ENCODE measurements at regions of chr1 and their contacts with region 1.

Region 1: GRCh38 chr1:59422921-59423575 is 126.2 kb downstream of the FGGY start:
- DNase-seq: peak in 1 of 2 experiments; percentile 36
- H3K4me3 ChIP-seq: no peak overlapping the region
- H3K27ac ChIP-seq: no peak overlapping the region
- H3K4me1 ChIP-seq: peaks cover 25% of the 10 kb centered on the region
- H3K27me3 ChIP-seq: no peaks in the 10 kb centered on the region
- CTCF ChIP-seq: no peak

Region 2: DNA sequence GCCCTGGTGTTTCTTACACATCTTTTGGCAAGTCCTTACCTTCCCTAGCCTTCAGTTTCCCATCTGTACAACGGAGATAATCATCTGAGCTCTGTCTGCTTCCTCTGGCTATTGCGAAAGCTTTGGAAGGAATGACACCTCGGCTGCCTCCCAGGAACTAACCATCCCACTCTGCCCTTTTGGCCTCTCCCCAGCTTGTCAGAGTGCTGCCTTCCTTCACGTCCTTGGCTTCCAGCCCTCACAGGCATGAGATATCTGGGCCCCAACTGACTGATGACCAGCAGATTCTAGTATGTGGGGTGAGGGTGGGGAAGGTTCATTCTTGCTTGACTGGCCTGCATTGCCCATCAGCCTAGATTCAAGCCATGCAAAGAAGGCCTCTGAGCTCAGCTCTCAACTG is 379.3 kb before region 1 on chr1:
- CTCF ChIA-PET with region 1: no interaction called
- POLR2A ChIA-PET with region 1: no interaction called
- intact Hi-C with region 1: loop called (anchors 5 kb)
- DNase-seq: peak; percentile 85
- H3K4me3 ChIP-seq: no peak overlapping the region
- H3K27ac ChIP-seq: peak overlapping the region; percentile 22; the same call in 1 of the 2 replicates
- H3K4me1 ChIP-seq: peaks cover 30% of the 10 kb centered on the region
- H3K27me3 ChIP-seq: no peaks in the 10 kb centered on the region
- CTCF ChIP-seq: no peak

Region 3: GRCh38 chr1:59150577-59151391 is 272.3 kb before region 1 on chr1:
- CTCF ChIA-PET with region 1: no interaction called
- POLR2A ChIA-PET with region 1: no interaction called
- intact Hi-C with region 1: loop called (anchors 10 kb)
- DNase-seq: peak; percentile 82 to 92
- H3K4me3 ChIP-seq: peak overlapping the region; percentile 48
- H3K27ac ChIP-seq: peak overlapping the region; percentile 72
- H3K4me1 ChIP-seq: peaks cover 66% of the 10 kb centered on the region
- H3K27me3 ChIP-seq: no peaks in the 10 kb centered on the region
- CTCF ChIP-seq: no peak

Region 4: GRCh38 chr1:59232216-59232615 is 190.8 kb before region 1 on chr1:
- CTCF ChIA-PET with region 1: no interaction called
- POLR2A ChIA-PET with region 1: interaction called, 10 read pairs
- intact Hi-C with region 1: no loop called
- DNase-seq: no peak
- H3K4me3 ChIP-seq: no peak overlapping the region
- H3K27ac ChIP-seq: no peak overlapping the region
- H3K4me1 ChIP-seq: no peaks in the 10 kb centered on the region
- H3K27me3 ChIP-seq: no peaks in the 10 kb centered on the region
- CTCF ChIP-seq: no peak

Region 5: DNA sequence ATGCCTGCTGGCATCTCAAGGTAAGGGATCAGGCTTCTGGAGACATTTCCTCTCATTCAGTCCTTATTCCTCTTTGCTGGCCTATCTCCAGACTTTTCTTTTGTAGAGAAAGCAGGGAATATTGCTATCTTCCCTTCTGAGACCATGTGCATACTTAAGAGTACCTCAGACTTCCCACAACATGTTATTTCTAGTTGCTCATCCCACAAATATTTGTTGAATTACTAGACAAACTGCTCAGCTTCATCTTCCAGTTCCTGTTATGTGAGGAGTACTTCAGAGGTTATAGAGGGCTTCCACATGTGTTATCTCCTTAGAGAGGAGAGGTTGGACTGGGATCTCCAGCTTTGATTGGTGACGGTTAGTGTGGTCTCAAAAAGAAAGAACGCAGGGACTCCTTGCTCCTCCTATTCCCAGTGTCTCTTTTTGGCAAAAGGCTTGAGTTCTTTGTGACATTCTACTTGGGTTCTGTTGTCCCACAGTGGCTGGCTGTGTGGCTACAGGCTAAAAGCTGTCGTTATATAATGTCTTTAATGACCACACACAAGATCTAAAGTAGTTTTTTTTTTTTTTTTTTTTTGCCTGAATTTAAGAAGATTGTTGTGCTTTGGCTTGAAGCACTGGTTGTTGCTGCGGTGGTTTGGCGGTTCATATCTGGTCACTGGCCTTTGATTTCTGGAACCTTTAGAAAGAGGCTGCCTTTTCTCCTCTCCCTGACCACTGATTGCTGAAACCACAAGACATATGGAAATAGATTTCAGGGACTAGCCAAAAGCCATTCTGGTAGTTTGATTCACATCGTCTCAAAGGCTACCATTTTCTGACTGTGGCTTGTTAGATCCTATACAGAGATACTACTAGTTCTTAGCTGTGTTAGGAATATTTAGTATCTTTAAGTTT is 47.5 kb before region 1 on chr1:
- CTCF ChIA-PET with region 1: no interaction called
- POLR2A ChIA-PET with region 1: no interaction called
- intact Hi-C with region 1: loop called (anchors 2 kb)
- DNase-seq: peak; percentile 25 to 54
- H3K4me3 ChIP-seq: no peak overlapping the region
- H3K27ac ChIP-seq: no peak overlapping the region
- H3K4me1 ChIP-seq: no peaks in the 10 kb centered on the region
- H3K27me3 ChIP-seq: no peaks in the 10 kb centered on the region
- CTCF ChIP-seq: no peak

Region 6: DNA sequence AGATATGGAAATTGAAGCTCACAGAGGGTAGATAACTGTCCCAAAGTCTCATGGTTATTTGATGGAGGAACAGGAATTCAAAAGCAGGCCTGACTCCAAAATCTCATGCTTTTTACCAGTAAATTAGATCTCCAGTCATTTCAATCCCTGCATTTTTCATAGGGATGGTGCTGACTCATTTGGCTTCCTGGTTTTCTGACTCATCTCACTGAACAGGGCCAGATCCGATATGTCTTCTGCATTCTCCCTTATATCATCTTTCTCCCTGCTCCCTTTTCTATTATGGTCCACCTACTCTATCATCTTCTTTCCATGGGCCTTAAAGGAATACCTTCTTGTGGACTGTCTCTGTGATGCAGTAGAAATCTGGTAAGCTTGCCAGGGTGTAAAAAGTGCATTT is 61.0 kb after region 1 on chr1:
- CTCF ChIA-PET with region 1: interaction called, 4 read pairs
- POLR2A ChIA-PET with region 1: no interaction called
- intact Hi-C with region 1: loop called (anchors 5 kb)
- DNase-seq: peak in 1 of 2 experiments; percentile 52
- H3K4me3 ChIP-seq: no peak overlapping the region
- H3K27ac ChIP-seq: peak overlapping the region; percentile 19
- H3K4me1 ChIP-seq: peaks cover 22% of the 10 kb centered on the region
- H3K27me3 ChIP-seq: no peaks in the 10 kb centered on the region
- CTCF ChIP-seq: no peak

Region 7: DNA sequence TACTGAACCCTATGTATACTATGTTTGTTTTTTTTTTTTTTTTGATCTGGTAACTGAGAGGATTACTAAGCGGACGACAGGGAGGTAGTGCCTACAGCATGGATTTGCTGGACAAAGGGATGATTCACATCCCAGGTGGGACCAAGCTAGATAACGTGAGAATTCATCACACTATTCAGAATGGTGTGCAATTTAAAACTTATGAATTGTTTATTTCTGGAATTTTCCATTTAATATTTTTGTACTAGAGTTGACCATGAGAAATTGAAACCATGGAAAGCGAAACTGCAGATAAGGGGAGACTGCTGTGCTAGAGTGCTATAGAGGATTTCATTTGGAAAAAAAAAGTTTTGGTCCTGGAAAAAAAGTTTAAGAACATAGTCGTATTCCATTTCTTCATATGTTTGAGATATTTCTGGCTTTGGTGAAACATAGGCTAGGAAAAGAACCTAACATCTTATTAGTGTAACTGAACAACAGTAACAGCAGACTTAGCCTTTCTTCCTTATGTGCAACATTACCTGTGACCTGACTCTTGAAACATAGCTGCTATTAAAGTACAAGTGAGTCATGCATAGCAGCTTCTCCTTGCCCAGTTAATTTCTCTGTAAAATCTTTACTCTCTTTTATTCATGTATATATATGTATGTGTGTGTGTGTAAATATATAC is 76.4 kb after region 1 on chr1:
- CTCF ChIA-PET with region 1: no interaction called
- POLR2A ChIA-PET with region 1: no interaction called
- intact Hi-C with region 1: loop called (anchors 1 kb)
- DNase-seq: peak in 1 of 2 experiments; percentile 76
- H3K4me3 ChIP-seq: peak overlapping the region; percentile 41
- H3K27ac ChIP-seq: peak overlapping the region; percentile 79
- H3K4me1 ChIP-seq: peaks cover 38% of the 10 kb centered on the region
- H3K27me3 ChIP-seq: no peaks in the 10 kb centered on the region
- CTCF ChIP-seq: no peak

Measured in PC-9 (cell line).